Transverse colon (tissue), 4 donors: ENCODE measurements at regions of chr13 and their contacts with region 1.

Region 1: DNA sequence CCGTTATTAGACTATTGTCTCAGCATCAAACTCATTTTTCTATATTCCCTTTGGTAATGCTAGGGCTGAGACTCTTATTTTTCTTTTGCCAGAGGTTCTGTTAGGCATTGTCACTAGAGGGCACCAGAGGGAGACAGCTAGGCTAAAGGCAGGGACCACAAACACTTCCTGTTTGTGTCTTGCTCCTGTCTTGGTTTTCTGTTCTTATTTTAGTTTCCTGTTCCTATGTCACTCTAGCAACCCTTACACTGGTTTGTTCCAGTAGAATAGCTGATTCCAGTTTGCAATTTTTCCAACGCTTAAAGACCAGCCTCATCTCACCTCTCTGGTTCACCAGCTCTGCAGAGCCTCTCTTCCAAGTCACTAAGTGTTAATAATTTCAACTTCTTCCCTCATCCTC is 772.0 kb downstream of the DIAPH3 start:
- DNase-seq: peak; percentile 49
- H3K4me3 ChIP-seq: no peak overlapping the region
- H3K27ac ChIP-seq: no peak overlapping the region
- H3K4me1 ChIP-seq: peaks cover 0 to 5% (median 0%) of the 10 kb centered on the region in 4 donors
- H3K27me3 ChIP-seq: no peaks in the 10 kb centered on the region
- CTCF ChIP-seq: peak; percentile 63 to 80 (median 71)
- EP300 ChIP-seq: no peak
- POLR2A ChIP-seq: no peak

Region 2: DNA sequence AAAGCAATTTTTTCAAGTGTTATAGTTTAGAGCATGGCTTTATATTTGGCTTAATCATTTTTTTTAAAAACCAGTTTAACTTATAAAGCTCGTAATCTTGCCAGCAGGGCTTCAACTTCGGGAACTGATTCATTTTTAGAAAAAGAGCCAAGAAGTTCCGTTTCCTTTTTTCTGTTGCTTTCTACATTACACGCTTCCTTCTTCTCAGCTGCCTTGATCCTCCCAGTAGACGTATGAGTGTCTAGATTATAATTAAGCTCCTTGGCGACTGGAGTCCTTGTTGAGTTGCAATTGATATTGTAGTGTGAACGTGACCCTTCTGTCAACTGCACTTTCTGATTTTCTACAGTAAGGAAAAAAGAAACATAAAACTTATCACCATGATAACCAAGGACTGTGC is 274.8 kb after region 1 on chr13:
- in situ Hi-C with region 1: loop called in 2 of 4 experiments (anchors 10 to 25 kb)
- intact Hi-C with region 1: no loop called
- DNase-seq: no peak
- H3K4me3 ChIP-seq: no peak overlapping the region
- H3K27ac ChIP-seq: no peak overlapping the region
- H3K4me1 ChIP-seq: peaks cover 0 to 3% (median 0%) of the 10 kb centered on the region in 4 donors
- H3K27me3 ChIP-seq: no peaks in the 10 kb centered on the region
- CTCF ChIP-seq: no peak
- EP300 ChIP-seq: no peak
- POLR2A ChIP-seq: no peak

Region 3: DNA sequence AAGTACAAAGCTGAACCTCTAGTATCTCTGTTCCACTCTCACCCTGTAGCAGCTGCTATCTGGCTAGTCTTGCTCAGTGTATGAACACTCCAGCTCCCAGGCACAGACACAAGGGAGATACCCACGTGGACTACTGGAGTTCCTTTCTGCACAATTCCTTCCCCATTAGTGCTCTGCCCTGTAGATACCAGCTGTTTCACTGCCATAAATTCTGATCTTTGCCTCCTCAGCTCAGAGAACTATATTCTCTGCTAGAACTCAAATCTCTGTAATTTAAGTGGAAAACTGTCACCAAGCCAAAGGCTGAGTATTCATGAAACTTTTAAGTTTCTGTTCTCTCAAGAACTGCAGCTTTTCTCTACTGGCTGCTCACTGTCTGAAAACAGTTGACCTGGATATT is 498.4 kb after region 1 on chr13:
- in situ Hi-C with region 1: no loop called
- intact Hi-C with region 1: no loop called
- DNase-seq: no peak
- H3K4me3 ChIP-seq: no peak overlapping the region
- H3K27ac ChIP-seq: no peak overlapping the region
- H3K4me1 ChIP-seq: peaks cover 0 to 6% (median 0%) of the 10 kb centered on the region in 4 donors
- H3K27me3 ChIP-seq: no peaks in the 10 kb centered on the region
- CTCF ChIP-seq: no peak
- EP300 ChIP-seq: no peak
- POLR2A ChIP-seq: no peak

Region 4: DNA sequence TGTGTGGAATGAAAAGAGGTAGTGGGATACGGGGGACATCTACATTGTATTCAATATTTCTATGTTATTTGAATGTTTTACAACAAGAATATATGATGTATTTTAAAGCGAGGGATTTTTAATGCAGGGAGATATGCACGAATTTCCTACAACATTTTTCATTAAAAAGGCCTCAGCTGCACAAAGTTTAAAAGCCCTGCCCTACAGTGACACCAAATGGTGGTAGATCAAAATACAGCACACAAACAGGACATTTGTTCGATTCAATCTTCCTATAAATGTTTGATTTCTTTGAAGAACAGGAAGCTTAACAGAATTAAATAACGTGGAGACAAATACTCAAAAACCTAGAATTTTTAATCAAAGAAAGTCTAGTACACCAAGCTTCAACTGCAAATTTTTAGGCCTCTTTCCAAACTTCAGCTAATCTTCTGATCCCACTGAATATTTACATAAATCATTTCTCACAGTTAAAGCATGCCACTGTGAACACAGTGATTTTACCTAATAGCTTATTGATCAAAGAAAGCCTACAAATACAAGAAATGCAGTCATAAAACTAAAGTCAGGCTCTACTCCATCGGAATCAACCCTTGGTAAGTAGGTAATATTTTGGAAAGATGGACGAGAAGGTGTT is 514.8 kb after region 1 on chr13:
- in situ Hi-C with region 1: loop called in 2 of 4 experiments (anchors 25 kb)
- intact Hi-C with region 1: no loop called
- DNase-seq: no peak
- H3K4me3 ChIP-seq: no peak overlapping the region
- H3K27ac ChIP-seq: no peak overlapping the region
- H3K4me1 ChIP-seq: no peaks in the 10 kb centered on the region
- H3K27me3 ChIP-seq: no peaks in the 10 kb centered on the region
- CTCF ChIP-seq: peak; percentile 42 to 51 (median 47)
- EP300 ChIP-seq: no peak
- POLR2A ChIP-seq: no peak

Region 5: DNA sequence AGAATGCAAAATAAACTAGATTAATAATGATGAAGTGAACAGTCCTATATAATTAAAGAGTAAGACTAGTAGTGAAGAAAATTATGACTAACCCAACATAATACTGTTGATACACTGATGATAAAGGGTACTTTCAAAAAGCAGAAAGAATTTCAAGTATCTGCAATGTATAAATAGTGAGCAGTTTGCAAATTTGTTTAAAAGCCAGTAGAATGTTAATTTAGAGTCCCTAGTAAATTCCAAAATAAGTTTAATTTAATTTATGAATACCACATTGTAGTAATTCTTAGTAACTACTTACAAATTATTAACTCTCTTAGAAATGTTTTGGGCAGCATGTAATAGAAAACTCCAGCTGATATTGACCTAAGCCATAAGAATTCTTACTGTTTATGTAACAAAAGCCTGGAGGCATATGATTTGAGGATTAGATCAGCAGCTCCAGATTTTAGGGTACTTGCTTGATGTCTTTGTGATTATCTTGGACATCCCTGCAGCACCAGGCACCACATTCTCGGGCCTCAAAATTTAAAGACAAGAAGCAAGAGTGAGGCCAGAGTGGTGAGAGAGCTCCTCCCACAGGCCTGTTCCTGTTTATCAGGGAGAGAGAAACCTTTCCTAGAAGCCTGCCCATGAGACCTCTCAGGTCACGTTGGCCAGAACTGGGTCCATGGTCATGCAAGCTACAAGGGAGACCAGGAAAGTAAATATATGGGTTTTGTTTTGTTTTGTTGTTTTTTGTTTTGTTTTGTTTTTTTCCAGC is 937.7 kb after region 1 on chr13:
- in situ Hi-C with region 1: loop called in 1 of 4 experiments (anchors 25 kb)
- intact Hi-C with region 1: no loop called
- DNase-seq: peak; percentile 48
- H3K4me3 ChIP-seq: no peak overlapping the region
- H3K27ac ChIP-seq: no peak overlapping the region
- H3K4me1 ChIP-seq: peaks cover 0 to 17% (median 6%) of the 10 kb centered on the region in 4 donors
- H3K27me3 ChIP-seq: no peaks in the 10 kb centered on the region
- CTCF ChIP-seq: peak in 3 of 5 experiments; percentile 18 to 32 (median 22)
- EP300 ChIP-seq: no peak
- POLR2A ChIP-seq: no peak